ENCODE measurements at regions of chr3 and their contacts with region 1.

Region 1: DNA sequence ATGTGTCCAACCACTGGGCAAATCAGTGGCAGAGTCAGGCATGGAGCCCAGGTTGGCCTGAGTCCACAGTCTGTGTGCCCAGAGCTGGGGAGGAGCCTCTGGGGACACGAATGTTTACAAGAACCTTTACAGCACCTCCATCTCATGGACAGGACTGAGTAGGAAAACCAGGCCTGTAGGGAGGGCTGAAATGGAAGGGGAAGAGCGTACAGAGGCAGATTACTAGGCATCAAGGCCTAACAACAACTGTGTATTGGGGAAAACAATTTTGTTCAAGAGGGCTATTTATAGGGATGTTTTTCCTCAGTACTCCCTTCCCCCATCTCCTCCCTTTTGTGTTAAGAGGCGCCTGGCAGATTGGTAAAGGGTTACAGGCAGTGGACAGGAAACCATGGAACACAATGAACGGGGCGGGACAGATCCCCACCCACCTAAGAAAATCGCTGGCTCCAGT is 15.1 kb upstream of the ARHGAP31 start:
- DNase-seq: peak; percentile 66
- H3K4me3 ChIP-seq: no peak overlapping the region
- H3K27ac ChIP-seq: peak overlapping the region in 7 of 8 donors; percentile 38 to 75 (median 71)
- H3K4me1 ChIP-seq: peaks cover 0 to 20% (median 0%) of the 10 kb centered on the region in 6 donors
- H3K27me3 ChIP-seq: no peaks in the 10 kb centered on the region
- CTCF ChIP-seq: no peak
- POLR2A ChIP-seq: no peak

Region 2: DNA sequence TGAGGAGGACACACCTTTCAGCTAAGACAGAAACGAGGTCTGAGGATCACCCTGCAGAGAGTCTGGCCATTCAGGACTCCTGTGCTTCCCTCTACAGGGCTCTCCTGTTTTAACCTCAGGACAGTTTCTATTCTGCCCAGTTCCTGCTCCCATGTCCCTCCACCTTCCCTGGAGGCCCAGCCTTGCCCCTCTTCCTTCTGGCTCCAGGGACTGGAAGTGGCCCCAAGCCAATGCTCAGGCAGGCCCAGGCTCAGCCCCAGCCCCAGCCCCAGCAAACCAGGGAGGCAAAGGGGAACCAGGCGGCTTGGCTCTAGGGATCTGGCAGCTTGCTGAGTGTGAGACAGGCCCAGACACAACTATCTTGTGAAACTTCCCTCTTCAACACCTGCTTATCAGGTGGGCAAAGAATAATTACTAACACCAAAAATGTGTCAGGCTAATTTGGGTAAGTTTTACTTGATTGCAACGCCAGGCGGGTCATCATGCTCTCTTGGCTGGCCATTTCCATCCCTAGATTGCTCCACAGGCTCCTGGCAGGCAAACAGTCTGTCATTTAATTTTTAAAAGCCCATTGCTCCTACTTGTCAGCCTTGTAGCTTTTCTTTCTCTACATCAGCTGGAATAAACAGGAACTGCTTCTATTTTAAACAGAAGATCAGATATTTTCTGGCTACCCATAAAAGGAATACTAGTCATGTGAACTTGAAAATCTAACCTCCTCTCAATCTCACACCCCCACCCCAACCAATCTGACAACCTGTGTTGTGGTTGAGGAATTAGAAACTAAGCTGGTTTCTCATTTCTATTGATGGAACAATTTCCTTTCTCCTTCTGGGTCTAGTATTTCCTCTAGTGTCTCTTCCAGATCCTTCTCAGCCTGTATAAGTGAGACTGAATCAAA is 72.3 kb before region 1 on chr3:
- intact Hi-C with region 1: no loop called
- DNase-seq: peak; percentile 77
- H3K4me3 ChIP-seq: no peak overlapping the region
- H3K27ac ChIP-seq: peak overlapping the region in 3 of 8 donors; percentile 24 to 43 (median 26)
- H3K4me1 ChIP-seq: peaks cover 0 to 18% (median 0%) of the 10 kb centered on the region in 6 donors
- H3K27me3 ChIP-seq: no peaks in the 10 kb centered on the region
- CTCF ChIP-seq: no peak
- POLR2A ChIP-seq: no peak

Region 3: DNA sequence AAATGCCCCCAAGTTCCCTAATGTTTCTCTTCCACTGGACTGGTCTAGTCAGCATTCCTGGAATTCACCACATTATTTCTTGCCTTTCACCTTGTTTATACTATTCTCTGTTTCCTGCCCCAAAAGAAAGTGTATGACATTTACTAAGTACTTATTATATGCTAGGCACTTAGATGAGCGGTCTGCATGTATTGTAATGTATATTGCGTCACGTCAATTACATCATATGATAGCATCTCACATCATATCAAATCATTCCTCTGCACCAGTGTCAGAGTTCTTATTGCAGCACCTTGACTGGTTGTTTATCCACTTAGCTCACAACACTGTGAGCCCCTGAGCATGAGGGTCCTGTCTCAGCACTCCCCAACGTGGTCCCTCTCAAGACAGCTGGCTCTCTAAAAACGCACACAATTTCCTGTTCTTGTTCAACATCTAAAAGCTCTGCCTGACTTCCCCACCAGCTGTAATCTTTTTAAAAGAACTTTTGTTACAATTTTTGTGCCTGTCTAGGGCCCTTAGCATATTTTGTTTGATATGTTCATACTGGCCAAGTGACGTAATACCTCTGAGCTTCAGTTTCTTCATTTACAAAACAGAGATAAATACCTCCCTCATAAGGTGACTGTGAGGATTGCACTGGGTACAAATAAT is 73.8 kb after region 1 on chr3:
- intact Hi-C with region 1: loop called (anchors 10 kb)
- DNase-seq: no peak
- H3K4me3 ChIP-seq: no peak overlapping the region
- H3K27ac ChIP-seq: peak overlapping the region in 5 of 8 donors; percentile 22 to 36 (median 25)
- H3K4me1 ChIP-seq: peaks cover 19 to 62% (median 45%) of the 10 kb centered on the region in 6 donors
- H3K27me3 ChIP-seq: no peaks in the 10 kb centered on the region
- CTCF ChIP-seq: peak in 7 of 11 experiments; percentile 9 to 60 (median 35)
- POLR2A ChIP-seq: no peak

Region 4: DNA sequence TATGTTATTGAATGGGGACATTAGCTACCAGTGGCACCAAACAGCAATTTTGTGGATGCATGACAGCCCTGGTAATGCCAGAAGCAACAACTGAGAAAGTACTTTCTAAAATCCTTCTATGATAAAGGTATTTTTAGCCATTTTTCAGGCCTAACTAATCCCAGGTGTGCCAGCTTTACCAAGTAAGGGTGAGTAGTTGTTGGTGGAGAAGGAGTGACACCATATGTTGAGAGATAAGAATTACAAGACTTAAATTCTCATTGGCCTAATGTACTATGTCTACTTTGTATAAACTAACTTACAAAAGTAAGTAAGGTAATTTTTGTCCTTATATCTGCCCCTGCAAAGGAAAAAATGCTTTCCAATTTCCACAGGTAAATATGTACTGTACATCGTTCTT is 402.2 kb after region 1 on chr3:
- intact Hi-C with region 1: loop called (anchors 5 kb)
- DNase-seq: no peak
- H3K4me3 ChIP-seq: no peak overlapping the region
- H3K27ac ChIP-seq: no peak overlapping the region
- H3K4me1 ChIP-seq: peaks cover under 1 to 14% (median 11%) of the 10 kb centered on the region in 6 donors
- H3K27me3 ChIP-seq: no peaks in the 10 kb centered on the region
- CTCF ChIP-seq: peak in 8 of 11 experiments; percentile 30 to 62 (median 44)
- POLR2A ChIP-seq: no peak